ENCODE measurements at regions of chr20 and their contacts with region 1.

Region 1: DNA sequence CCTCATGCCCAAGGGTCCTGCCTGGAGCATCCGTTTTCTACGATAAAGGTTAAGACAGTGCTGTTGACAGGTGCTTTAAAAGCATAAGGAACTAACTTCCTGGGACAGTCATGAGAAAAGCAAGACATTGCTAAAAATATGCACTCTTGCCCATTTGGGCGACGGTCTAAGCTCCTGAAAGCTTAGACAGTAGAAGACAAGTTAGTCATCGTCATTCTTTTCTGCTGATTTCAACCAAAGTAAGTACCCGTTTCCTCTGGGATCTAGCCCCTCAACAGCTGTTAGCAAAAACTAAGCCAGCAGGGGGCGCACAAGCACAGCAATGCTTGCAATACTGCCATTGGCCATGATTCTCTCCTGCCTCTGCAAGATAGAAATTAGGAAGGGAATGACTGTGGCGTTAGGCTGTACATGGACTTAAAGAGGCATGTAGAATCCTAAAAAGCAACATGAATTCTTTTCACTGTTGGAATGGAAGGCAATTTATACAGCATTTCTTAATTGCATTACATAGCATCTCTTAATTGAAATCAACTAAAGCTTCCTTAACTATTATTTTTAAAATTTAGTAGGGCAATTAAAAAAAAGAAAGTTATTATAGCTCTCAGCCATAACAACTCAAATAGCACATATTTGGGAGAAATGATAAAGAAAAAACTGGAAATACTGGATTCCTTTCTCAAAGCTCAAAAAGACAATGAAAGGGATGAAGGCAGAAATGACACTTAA is 147.8 kb upstream of the RALGAPA2 start:
- DNase-seq: peak; percentile 87 to 92
- H3K4me3 ChIP-seq: no peak overlapping the region
- H3K4me3 Mint-ChIP-seq: no peak overlapping the region
- H3K27ac Mint-ChIP-seq: no peak overlapping the region
- H3K4me1 ChIP-seq: no peaks in the 10 kb centered on the region; the same call in 1 of the 2 replicates
- H3K4me1 Mint-ChIP-seq: no peaks in the 10 kb centered on the region
- H3K27me3 ChIP-seq: no peaks in the 10 kb centered on the region
- H3K27me3 Mint-ChIP-seq: peaks cover 4% of the 10 kb centered on the region
- CTCF ChIP-seq: peak; percentile 88 to 96

Region 2: GRCh38 chr20:21048841-21049273 is 188.6 kb after region 1 on chr20:
- CTCF ChIA-PET with region 1: no interaction called
- POLR2A ChIA-PET with region 1: no interaction called
- intact Hi-C with region 1: loop called (anchors 5 kb)
- DNase-seq: peak in 1 of 2 experiments; percentile 71
- H3K4me3 ChIP-seq: no peak overlapping the region
- H3K4me3 Mint-ChIP-seq: no peak overlapping the region
- H3K27ac Mint-ChIP-seq: no peak overlapping the region
- H3K4me1 ChIP-seq: peaks cover 32% of the 10 kb centered on the region
- H3K4me1 Mint-ChIP-seq: peaks cover 27% of the 10 kb centered on the region
- H3K27me3 ChIP-seq: no peaks in the 10 kb centered on the region
- H3K27me3 Mint-ChIP-seq: no peaks in the 10 kb centered on the region
- CTCF ChIP-seq: peak; percentile 60 to 76

Region 3: GRCh38 chr20:21125849-21126580 is 265.8 kb after region 1 on chr20 and contains the start of gene KIZ:
- CTCF ChIA-PET with region 1: interaction called, 5 read pairs
- POLR2A ChIA-PET with region 1: interaction called, 6 read pairs
- intact Hi-C with region 1: loop called (anchors 1 kb)
- DNase-seq: peak; percentile 97 to 100
- H3K4me3 ChIP-seq: peak within 1 kb of the TSS; percentile 97
- H3K4me3 Mint-ChIP-seq: peak within 1 kb of the TSS; percentile 84
- H3K27ac Mint-ChIP-seq: peak within 1 kb of the TSS; percentile 61
- H3K4me1 ChIP-seq: no peaks in the 10 kb centered on the region
- H3K4me1 Mint-ChIP-seq: peaks cover 9% of the 10 kb centered on the region
- H3K27me3 ChIP-seq: no peaks in the 10 kb centered on the region
- H3K27me3 Mint-ChIP-seq: no peaks in the 10 kb centered on the region
- CTCF ChIP-seq: peak; percentile 10 to 38
- total RNA-seq, gene KIZ: 21.0 and 31.8 TPM in 2 replicates

Region 4: GRCh38 chr20:21490095-21490494 is 629.9 kb after region 1 on chr20:
- CTCF ChIA-PET with region 1: no interaction called
- POLR2A ChIA-PET with region 1: interaction called, 3 read pairs
- intact Hi-C with region 1: loop called (anchors 5 kb)
- DNase-seq: no peak
- H3K4me3 ChIP-seq: no peak overlapping the region
- H3K4me3 Mint-ChIP-seq: no peak overlapping the region
- H3K27ac Mint-ChIP-seq: no peak overlapping the region
- H3K4me1 ChIP-seq: no peaks in the 10 kb centered on the region
- H3K4me1 Mint-ChIP-seq: no peaks in the 10 kb centered on the region
- H3K27me3 ChIP-seq: 0 out of 2 replicates have a peak, but pooled peaks cover 1% of the 10 kb centered on the region
- H3K27me3 Mint-ChIP-seq: peaks cover 24% of the 10 kb centered on the region
- CTCF ChIP-seq: peak in 1 of 2 experiments; percentile 10

Measured in Caco-2 (cell line).